ENCODE measurements at regions of chr18 and their contacts with region 1.

Region 1: GRCh38 chr18:76398896-76399612 is 96.0 kb downstream of the ZNF516 start:
- DNase-seq: peak; percentile 37
- ATAC-seq: peak; percentile 99
- H3K4me3 ChIP-seq: no peak overlapping the region
- H3K27ac ChIP-seq: no peak overlapping the region
- H3K4me1 ChIP-seq: no peaks in the 10 kb centered on the region
- H3K27me3 ChIP-seq: no peaks in the 10 kb centered on the region
- CTCF ChIP-seq: peak; percentile 95 to 98 (median 97); a peak in 5 of 6 replicates
- EP300 ChIP-seq: no peak
- POLR2A ChIP-seq: no peak
- RAD21 ChIP-seq: peak; percentile 94

Region 2: GRCh38 chr18:76410660-76411417 is 11.8 kb after region 1 on chr18:
- CTCF ChIA-PET with region 1: interaction called, 27 read pairs
- POLR2A ChIA-PET with region 1: no interaction called
- RAD21 ChIA-PET with region 1: interaction called, 4 read pairs
- SMC1A ChIA-PET with region 1: interaction called, 24 read pairs
- in situ Hi-C with region 1: no loop called
- intact Hi-C with region 1: no loop called
- DNase-seq: peak; percentile 40
- ATAC-seq: peak; percentile 96
- H3K4me3 ChIP-seq: no peak overlapping the region; the same call in 1 of the 2 replicates
- H3K27ac ChIP-seq: 0 out of 2 replicates have a peak overlapping the region, but pooled peaks have one; percentile 46
- H3K4me1 ChIP-seq: peaks cover 13% of the 10 kb centered on the region
- H3K27me3 ChIP-seq: no peaks in the 10 kb centered on the region
- CTCF ChIP-seq: no peak
- EP300 ChIP-seq: no peak
- POLR2A ChIP-seq: no peak
- RAD21 ChIP-seq: no peak

Region 3: GRCh38 chr18:76492669-76493212 is 93.7 kb after region 1 on chr18:
- CTCF ChIA-PET with region 1: interaction called, 11 read pairs
- POLR2A ChIA-PET with region 1: interaction called, 3 read pairs
- RAD21 ChIA-PET with region 1: interaction called, 6 read pairs
- SMC1A ChIA-PET with region 1: interaction called, 4 read pairs
- in situ Hi-C with region 1: no loop called
- intact Hi-C with region 1: no loop called
- DNase-seq: peak; percentile 94
- ATAC-seq: peak; percentile 80
- H3K4me3 ChIP-seq: peak overlapping the region; percentile 79
- H3K27ac ChIP-seq: peak overlapping the region; percentile 79
- H3K4me1 ChIP-seq: peaks cover 9% of the 10 kb centered on the region; the same call in 1 of the 2 replicates
- H3K27me3 ChIP-seq: no peaks in the 10 kb centered on the region
- CTCF ChIP-seq: no peak
- EP300 ChIP-seq: no peak
- POLR2A ChIP-seq: no peak; the same call in 1 of the 2 replicates
- RAD21 ChIP-seq: no peak

Region 4: GRCh38 chr18:76658627-76659026 is 259.6 kb after region 1 on chr18:
- CTCF ChIA-PET with region 1: interaction called, 10 read pairs
- POLR2A ChIA-PET with region 1: no interaction called
- RAD21 ChIA-PET with region 1: interaction called, 3 read pairs
- SMC1A ChIA-PET with region 1: no interaction called
- in situ Hi-C with region 1: no loop called
- intact Hi-C with region 1: no loop called
- DNase-seq: no peak
- ATAC-seq: peak; percentile 66; the same call in 1 of the 3 replicates
- H3K4me3 ChIP-seq: no peak overlapping the region
- H3K27ac ChIP-seq: no peak overlapping the region
- H3K4me1 ChIP-seq: peaks cover 5% of the 10 kb centered on the region; the same call in 1 of the 2 replicates
- H3K27me3 ChIP-seq: peaks cover 4% of the 10 kb centered on the region in 2 experiments; a peak in 3 of 4 replicates
- CTCF ChIP-seq: peak; percentile 22 to 42 (median 42); a peak in 5 of 6 replicates
- EP300 ChIP-seq: no peak
- POLR2A ChIP-seq: no peak
- RAD21 ChIP-seq: peak; percentile 20; the same call in 1 of the 2 replicates

Region 5: GRCh38 chr18:76709659-76710645 is 310.9 kb after region 1 on chr18:
- CTCF ChIA-PET with region 1: interaction called, 72 read pairs
- POLR2A ChIA-PET with region 1: no interaction called
- RAD21 ChIA-PET with region 1: interaction called, 16 read pairs
- SMC1A ChIA-PET with region 1: interaction called, 22 read pairs
- in situ Hi-C with region 1: loop called (anchors 5 kb)
- intact Hi-C with region 1: loop called (anchors 1 kb)
- DNase-seq: peak; percentile 12
- ATAC-seq: peak; percentile 93
- H3K4me3 ChIP-seq: no peak overlapping the region
- H3K27ac ChIP-seq: no peak overlapping the region
- H3K4me1 ChIP-seq: no peaks in the 10 kb centered on the region
- H3K27me3 ChIP-seq: no peaks in the 10 kb centered on the region
- CTCF ChIP-seq: peak; percentile 81 to 94 (median 87)
- EP300 ChIP-seq: no peak
- POLR2A ChIP-seq: no peak
- RAD21 ChIP-seq: peak; percentile 97